Posterior vena cava (tissue), 2 donors: ENCODE measurements at regions of chr11 and their contacts with region 1.

Region 1: GRCh38 chr11:44727373-44728287 is 868 bp downstream of the TSPAN18 start:
- DNase-seq: peak; percentile 93

Region 2: GRCh38 chr11:44634401-44635281 is 93.0 kb before region 1 on chr11:
- intact Hi-C with region 1: loop called (anchors 5 to 10 kb)
- DNase-seq: peak; percentile 90

Region 3: GRCh38 chr11:44766112-44766971 is 38.7 kb after region 1 on chr11:
- intact Hi-C with region 1: loop called in 1 of 2 experiments (anchors 1 kb)
- DNase-seq: peak; percentile 88

Region 4: GRCh38 chr11:44785856-44786606 is 58.4 kb after region 1 on chr11:
- intact Hi-C with region 1: no loop called
- DNase-seq: no peak

Region 5: DNA sequence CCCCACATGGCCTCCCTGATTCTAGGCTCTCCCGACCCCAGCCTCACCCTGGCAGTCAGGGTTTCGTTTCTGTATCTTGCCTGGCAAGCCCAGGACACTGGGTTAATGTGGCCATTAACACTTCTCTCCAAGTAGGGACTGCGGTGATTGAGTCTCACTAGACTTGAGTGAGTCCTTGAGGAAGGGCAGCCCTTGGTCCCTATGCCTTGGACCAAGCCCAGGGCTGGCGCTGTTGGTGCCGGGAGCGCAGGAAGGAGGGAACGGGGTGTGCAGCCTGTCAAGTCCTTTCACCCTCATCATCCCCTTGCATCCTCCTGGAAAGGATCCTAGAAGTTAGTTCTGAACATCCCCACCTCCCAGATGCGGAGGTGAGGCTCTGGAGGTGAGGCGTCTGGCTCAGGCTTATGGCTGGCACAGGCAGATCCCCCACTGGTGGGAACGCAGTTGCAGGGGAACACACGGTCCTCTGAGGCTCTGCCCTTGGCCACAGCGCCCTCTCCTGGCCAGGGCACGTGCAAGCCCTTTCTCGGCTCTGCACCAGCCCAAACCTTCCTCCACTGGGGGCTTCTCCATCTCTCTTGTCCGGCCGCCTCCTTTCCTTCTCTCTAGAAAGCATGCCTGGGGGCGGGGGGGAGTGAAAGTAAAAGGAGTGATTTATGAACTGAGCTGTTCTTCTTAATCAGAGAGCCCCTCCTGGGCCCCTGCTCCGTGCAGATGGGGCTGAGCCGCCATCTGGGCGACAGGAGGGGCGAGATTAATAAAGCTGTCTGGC is 166.4 kb after region 1 on chr11:
- intact Hi-C with region 1: loop called (anchors 5 kb)
- DNase-seq: peak; percentile 90

Region 6: DNA sequence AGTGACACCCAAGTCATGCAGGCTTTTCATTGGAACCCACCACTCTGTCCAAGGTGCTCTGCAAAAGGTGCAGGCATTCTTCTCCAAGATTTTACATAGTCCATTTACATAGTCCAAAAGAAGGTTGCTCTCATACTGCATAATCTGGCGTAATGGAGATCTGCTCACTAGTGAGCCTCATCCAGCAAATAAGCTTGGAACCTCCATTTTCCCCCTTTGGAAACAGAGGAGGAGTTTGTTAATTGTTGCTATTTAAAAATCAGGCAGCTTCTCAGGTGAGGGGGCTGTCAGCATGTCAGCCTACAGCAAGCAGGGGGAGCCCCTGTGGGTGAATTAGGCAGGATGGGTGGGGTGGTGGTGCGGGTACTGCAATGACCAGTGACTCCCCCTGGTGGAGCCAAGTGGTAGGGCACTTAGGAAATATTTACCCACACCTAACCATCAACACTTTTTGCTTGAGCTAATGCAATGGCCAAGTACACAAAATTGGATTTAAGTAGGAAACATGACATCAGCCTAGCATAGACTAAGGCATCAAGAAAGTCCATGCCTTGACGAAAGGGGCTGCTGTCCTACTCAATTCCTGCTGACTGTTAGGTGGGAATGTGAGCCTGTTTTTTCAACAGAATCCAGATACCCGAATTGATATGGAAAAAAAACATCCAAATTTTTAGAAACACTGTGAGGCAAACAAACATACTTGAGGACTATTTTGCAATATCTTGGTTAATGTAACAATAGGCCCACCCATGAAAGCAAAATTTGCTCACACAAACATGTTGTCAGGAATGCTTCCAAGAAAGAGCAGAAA is 1801.7 kb after region 1 on chr11:
- intact Hi-C with region 1: no loop called
- DNase-seq: peak; percentile 81